Caco-2 (cell line): ENCODE measurements at regions of chr15 and their contacts with region 1.

Region 1: GRCh38 chr15:64651573-64652260 is 123.7 kb downstream of the RBPMS2 start:
- DNase-seq: peak; percentile 68 to 69
- H3K4me3 ChIP-seq: no peak overlapping the region
- H3K4me3 Mint-ChIP-seq: no peak overlapping the region
- H3K27ac Mint-ChIP-seq: no peak overlapping the region
- H3K4me1 ChIP-seq: peaks cover 17% of the 10 kb centered on the region
- H3K4me1 Mint-ChIP-seq: peaks cover 17% of the 10 kb centered on the region
- H3K27me3 ChIP-seq: no peaks in the 10 kb centered on the region
- H3K27me3 Mint-ChIP-seq: no peaks in the 10 kb centered on the region
- CTCF ChIP-seq: no peak

Region 2: GRCh38 chr15:64430000-64430735 is 221.5 kb before region 1 on chr15:
- CTCF ChIA-PET with region 1: interaction called, 4 read pairs
- POLR2A ChIA-PET with region 1: no interaction called
- intact Hi-C with region 1: loop called (anchors 1 kb)
- DNase-seq: no peak
- H3K4me3 ChIP-seq: no peak overlapping the region
- H3K4me3 Mint-ChIP-seq: no peak overlapping the region
- H3K27ac Mint-ChIP-seq: no peak overlapping the region
- H3K4me1 ChIP-seq: no peaks in the 10 kb centered on the region
- H3K4me1 Mint-ChIP-seq: no peaks in the 10 kb centered on the region
- H3K27me3 ChIP-seq: no peaks in the 10 kb centered on the region
- H3K27me3 Mint-ChIP-seq: no peaks in the 10 kb centered on the region
- CTCF ChIP-seq: no peak

Region 3: DNA sequence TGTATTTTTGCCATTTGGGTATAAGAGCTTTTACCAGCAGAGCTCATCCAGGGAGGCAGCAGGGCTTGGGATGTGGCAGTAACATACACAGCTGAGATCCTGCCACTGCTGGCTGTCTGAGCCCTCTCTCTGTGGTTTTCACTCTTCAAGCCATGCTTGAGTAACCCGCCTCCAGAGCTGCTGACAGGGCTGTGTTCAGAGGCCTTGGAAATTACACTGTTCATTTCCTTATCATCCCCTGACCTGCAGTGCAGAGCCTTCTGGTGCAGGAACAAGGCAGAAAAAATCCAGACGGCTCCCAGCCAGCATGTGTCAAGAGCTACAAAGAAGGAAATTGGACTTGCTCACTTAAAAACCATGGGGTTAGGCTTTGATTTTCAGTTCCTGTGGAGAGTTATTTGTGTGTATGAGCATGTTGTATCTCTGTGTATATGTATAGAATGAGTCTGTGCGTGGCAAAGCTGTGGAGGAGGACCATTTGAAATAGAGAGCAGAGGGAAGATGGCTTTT is 144.4 kb before region 1 on chr15:
- CTCF ChIA-PET with region 1: no interaction called
- POLR2A ChIA-PET with region 1: no interaction called
- intact Hi-C with region 1: loop called (anchors 5 kb)
- DNase-seq: peak; percentile 44 to 56
- H3K4me3 ChIP-seq: no peak overlapping the region
- H3K4me3 Mint-ChIP-seq: peak overlapping the region; percentile 34
- H3K27ac Mint-ChIP-seq: peak overlapping the region; percentile 63
- H3K4me1 ChIP-seq: peaks cover 32% of the 10 kb centered on the region
- H3K4me1 Mint-ChIP-seq: peaks cover 38% of the 10 kb centered on the region
- H3K27me3 ChIP-seq: no peaks in the 10 kb centered on the region
- H3K27me3 Mint-ChIP-seq: no peaks in the 10 kb centered on the region
- CTCF ChIP-seq: no peak

Region 4: GRCh38 chr15:64521726-64522164 is 130.0 kb before region 1 on chr15:
- CTCF ChIA-PET with region 1: no interaction called
- POLR2A ChIA-PET with region 1: no interaction called
- intact Hi-C with region 1: loop called (anchors 5 kb)
- DNase-seq: peak; percentile 70 to 79
- H3K4me3 ChIP-seq: no peak overlapping the region
- H3K4me3 Mint-ChIP-seq: no peak overlapping the region
- H3K27ac Mint-ChIP-seq: no peak overlapping the region
- H3K4me1 ChIP-seq: peaks cover 22% of the 10 kb centered on the region
- H3K4me1 Mint-ChIP-seq: peaks cover 21% of the 10 kb centered on the region
- H3K27me3 ChIP-seq: no peaks in the 10 kb centered on the region
- H3K27me3 Mint-ChIP-seq: no peaks in the 10 kb centered on the region
- CTCF ChIP-seq: no peak

Region 5: DNA sequence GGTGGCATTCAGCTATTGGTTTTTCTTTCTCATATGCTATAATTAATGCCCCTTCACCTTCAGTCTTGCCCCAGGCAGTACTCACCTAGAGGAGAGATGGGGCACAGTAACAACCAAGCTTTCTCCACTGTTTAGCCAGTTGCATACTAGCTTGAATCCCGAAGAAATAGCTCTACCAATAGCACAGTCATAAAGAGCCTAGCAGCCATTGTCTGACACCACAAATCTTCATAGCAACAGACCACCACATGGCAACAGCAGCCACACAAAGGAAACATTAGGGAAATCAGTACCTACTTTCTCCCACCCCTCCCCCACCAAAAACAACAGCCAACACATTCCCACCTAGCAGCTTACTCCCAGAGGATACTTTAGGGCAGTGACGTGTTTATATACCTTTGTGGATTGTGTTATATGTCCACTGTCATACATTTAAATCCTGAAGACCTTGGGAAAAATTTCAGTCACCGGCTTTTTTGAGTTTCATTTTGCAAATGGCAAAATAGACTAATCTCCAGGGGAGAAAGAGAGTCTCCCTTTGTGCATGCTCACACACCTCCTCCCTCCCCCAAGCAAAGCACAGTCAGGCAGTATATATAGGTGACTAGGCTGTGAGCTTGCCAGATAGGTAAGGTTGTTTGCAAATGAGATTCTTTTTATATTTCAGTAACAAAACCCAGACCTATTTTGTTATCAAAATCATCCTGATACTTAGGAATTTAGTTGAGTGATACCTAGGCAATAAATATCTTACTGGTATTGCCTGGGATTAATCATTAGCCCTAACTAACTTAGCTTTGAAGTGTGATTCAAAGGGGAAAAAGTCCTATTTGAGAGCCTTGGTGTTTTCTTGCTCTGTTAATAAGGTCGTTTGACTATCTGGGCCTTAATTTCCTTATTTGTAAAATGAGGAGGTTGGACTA is 16.9 kb before region 1 on chr15:
- CTCF ChIA-PET with region 1: interaction called, 9 read pairs
- POLR2A ChIA-PET with region 1: interaction called, 8 read pairs
- intact Hi-C with region 1: loop called (anchors 1 kb)
- DNase-seq: peak; percentile 78 to 80
- H3K4me3 ChIP-seq: peak overlapping the region; percentile 3; the same call in 1 of the 2 replicates
- H3K4me3 Mint-ChIP-seq: peak overlapping the region; percentile 67
- H3K27ac Mint-ChIP-seq: peak overlapping the region; percentile 66
- H3K4me1 ChIP-seq: peaks cover 57% of the 10 kb centered on the region
- H3K4me1 Mint-ChIP-seq: peaks cover 36% of the 10 kb centered on the region
- H3K27me3 ChIP-seq: no peaks in the 10 kb centered on the region
- H3K27me3 Mint-ChIP-seq: no peaks in the 10 kb centered on the region
- CTCF ChIP-seq: no peak

Region 6: GRCh38 chr15:64640146-64640871 is 11.4 kb before region 1 on chr15:
- CTCF ChIA-PET with region 1: interaction called, 9 read pairs
- POLR2A ChIA-PET with region 1: interaction called, 8 read pairs
- intact Hi-C with region 1: loop called (anchors 1 kb)
- DNase-seq: no peak
- H3K4me3 ChIP-seq: no peak overlapping the region
- H3K4me3 Mint-ChIP-seq: no peak overlapping the region
- H3K27ac Mint-ChIP-seq: peak overlapping the region; percentile 84
- H3K4me1 ChIP-seq: peaks cover 81% of the 10 kb centered on the region
- H3K4me1 Mint-ChIP-seq: peaks cover 59% of the 10 kb centered on the region
- H3K27me3 ChIP-seq: no peaks in the 10 kb centered on the region
- H3K27me3 Mint-ChIP-seq: no peaks in the 10 kb centered on the region
- CTCF ChIP-seq: no peak